ENCODE measurements at regions of chr1 and their contacts with region 1.

Region 1: GRCh38 chr1:46477153-46477929 is 12.3 kb upstream of the DMBX1 start:
- DNase-seq: peak; percentile 72 to 73
- H3K4me3 ChIP-seq: no peak overlapping the region
- H3K27ac ChIP-seq: no peak overlapping the region
- H3K4me1 ChIP-seq: no peaks in the 10 kb centered on the region
- H3K27me3 ChIP-seq: no peaks in the 10 kb centered on the region
- CTCF ChIP-seq: peak; percentile 84 to 97 (median 92)
- POLR2A ChIP-seq: no peak

Region 2: GRCh38 chr1:46527474-46528296 is 50.3 kb after region 1 on chr1:
- intact Hi-C with region 1: loop called (anchors 2 kb)
- DNase-seq: peak; percentile 86 to 87
- H3K4me3 ChIP-seq: no peak overlapping the region
- H3K27ac ChIP-seq: no peak overlapping the region
- H3K4me1 ChIP-seq: peaks cover 4 to 8% of the 10 kb centered on the region in 2 donors
- H3K27me3 ChIP-seq: no peaks in the 10 kb centered on the region
- CTCF ChIP-seq: peak; percentile 67 to 98 (median 94)
- POLR2A ChIP-seq: no peak

Measured in thyroid gland (tissue), 4 donors.